Activated B cell treated with CpG ODN at 0.5 μM for 24 hours (primary cell): ENCODE measurements at regions of chr19 and their contacts with region 1.

Region 1: GRCh38 chr19:11738746-11739620 is at the start of gene ZNF823:
- DNase-seq: peak; percentile 87
- ATAC-seq: peak; percentile 98
- H3K4me3 Mint-ChIP-seq: peak within 1 kb of the TSS; percentile 99
- H3K27ac Mint-ChIP-seq: peak within 1 kb of the TSS; percentile 91
- H3K4me1 Mint-ChIP-seq: peaks cover 25% of the 10 kb centered on the region
- H3K27me3 Mint-ChIP-seq: peaks cover 1% of the 10 kb centered on the region
- CTCF ChIP-seq: no peak
- total RNA-seq, gene ZNF823: 2.6 and 3.0 TPM in 2 replicates

Region 2: GRCh38 chr19:11597202-11598102 is 141.5 kb before region 1 on chr19 and contains the start of gene ZNF627:
- CTCF ChIA-PET with region 1: no interaction called
- POLR2A ChIA-PET with region 1: no interaction called
- intact Hi-C with region 1: loop called (anchors 2 kb)
- DNase-seq: peak; percentile 91
- ATAC-seq: peak; percentile 99
- H3K4me3 Mint-ChIP-seq: peak within 1 kb of the TSS; percentile 88
- H3K27ac Mint-ChIP-seq: peak within 1 kb of the TSS; percentile 87
- H3K4me1 Mint-ChIP-seq: peaks cover 47% of the 10 kb centered on the region
- H3K27me3 Mint-ChIP-seq: no peaks in the 10 kb centered on the region
- CTCF ChIP-seq: no peak
- total RNA-seq, gene ZNF627: 17.0 and 17.6 TPM in 2 replicates

Region 3: GRCh38 chr19:11766597-11767591 is 27.9 kb after region 1 on chr19 and contains the start of gene ZNF441:
- CTCF ChIA-PET with region 1: interaction called, 3 read pairs
- POLR2A ChIA-PET with region 1: interaction called, 9 read pairs
- intact Hi-C with region 1: loop called (anchors 1 kb)
- DNase-seq: peak; percentile 87
- ATAC-seq: peak; percentile 95
- H3K4me3 Mint-ChIP-seq: peak within 1 kb of the TSS; percentile 99
- H3K27ac Mint-ChIP-seq: peak within 1 kb of the TSS; percentile 96
- H3K4me1 Mint-ChIP-seq: peaks cover 25% of the 10 kb centered on the region
- H3K27me3 Mint-ChIP-seq: peaks cover 2% of the 10 kb centered on the region
- CTCF ChIP-seq: no peak
- total RNA-seq, gene ZNF441: 23.3 and 23.9 TPM in 2 replicates

Region 4: DNA sequence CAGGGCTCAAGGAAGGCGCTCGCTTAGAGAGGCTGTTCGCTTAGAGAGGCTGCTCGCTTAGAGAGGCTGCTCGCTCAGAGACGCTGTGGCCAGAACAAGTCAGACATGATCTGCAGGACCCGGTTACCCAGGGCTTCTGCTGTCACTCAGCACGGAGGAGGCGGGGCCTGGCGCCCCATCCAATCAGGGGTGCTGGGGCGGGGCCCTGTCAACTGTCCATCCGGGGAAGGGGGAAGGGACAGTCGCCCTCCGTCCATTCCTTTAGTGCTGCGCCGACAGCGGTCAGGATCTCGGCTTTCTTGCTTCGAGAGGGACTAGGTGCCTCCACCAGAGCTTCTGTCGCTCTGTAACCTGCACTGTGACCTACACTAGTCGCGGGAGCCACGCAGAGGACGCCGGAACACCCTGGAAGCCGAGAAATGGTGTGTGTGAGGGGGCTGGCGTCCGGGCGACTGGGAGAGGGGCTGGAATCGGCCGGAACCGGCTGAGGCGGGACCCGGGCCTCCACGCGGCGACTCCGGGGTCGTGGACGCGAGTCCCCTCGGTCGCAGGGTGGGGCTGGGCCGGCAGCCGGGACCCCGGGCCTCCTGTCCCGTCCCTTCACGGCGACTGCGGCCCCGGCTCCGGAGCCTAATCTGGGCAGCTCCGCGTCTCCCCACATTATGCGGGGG is 75.2 kb after region 1 on chr19 and contains the start of gene ZNF440:
- CTCF ChIA-PET with region 1: no interaction called
- POLR2A ChIA-PET with region 1: no interaction called
- intact Hi-C with region 1: loop called (anchors 1 kb)
- DNase-seq: peak; percentile 83
- ATAC-seq: peak; percentile 99
- H3K4me3 Mint-ChIP-seq: peak within 1 kb of the TSS; percentile 92
- H3K27ac Mint-ChIP-seq: peak within 1 kb of the TSS; percentile 84
- H3K4me1 Mint-ChIP-seq: peaks cover 28% of the 10 kb centered on the region
- H3K27me3 Mint-ChIP-seq: no peaks in the 10 kb centered on the region
- CTCF ChIP-seq: no peak
- total RNA-seq, gene ZNF440: 17.7 and 18.5 TPM in 2 replicates

Region 5: DNA sequence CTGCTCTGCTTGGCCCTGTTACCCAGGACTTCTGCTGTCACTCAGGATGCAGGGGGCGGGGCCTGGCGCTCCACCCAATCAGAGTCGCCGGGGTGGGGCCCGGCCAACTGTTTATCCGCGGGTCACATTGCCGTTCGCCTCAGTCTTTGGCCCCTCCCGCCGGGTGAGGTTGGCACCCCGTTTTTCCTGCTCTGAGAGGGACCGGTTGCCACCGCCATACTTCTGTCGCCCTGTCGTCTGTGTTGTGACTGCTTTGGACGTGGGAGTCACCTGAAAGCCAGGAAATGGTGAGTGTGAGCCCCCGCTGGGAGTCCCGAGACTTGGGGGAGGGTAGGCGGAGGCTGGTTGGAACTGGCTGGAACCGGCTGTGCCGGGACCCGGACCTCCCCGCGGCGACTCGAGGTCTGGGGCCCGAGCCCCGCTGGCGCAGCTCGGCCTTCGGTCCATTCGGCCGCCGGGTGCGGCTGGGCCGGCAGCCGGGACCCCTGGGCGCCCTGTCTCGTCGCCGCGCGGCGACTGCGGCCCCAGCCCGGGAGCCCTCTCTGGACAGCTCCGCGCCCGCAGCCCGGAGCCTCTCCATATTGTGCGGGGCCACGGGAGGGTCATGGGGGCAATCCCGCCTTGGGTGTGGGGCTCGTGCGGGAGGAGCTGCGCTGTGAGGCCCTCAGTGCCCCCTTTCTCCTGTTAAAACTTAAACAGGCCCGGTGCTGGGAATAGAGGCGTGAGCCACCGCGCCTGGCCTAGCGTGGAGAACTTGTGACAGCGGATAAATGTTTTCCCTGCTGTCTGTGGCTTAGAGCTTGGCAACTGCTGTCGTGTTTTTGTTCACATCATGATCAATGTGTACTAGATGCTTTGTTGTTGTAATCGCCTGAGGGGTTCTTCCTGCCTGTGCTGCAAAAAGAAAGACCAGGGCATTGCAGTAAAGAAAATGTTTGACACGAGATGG is 325.9 kb after region 1 on chr19 and contains the start of gene ZNF844:
- CTCF ChIA-PET with region 1: no interaction called
- POLR2A ChIA-PET with region 1: interaction called, 13 read pairs
- intact Hi-C with region 1: no loop called
- DNase-seq: peak; percentile 81
- ATAC-seq: peak; percentile 95
- H3K4me3 Mint-ChIP-seq: peak within 1 kb of the TSS; percentile 92
- H3K27ac Mint-ChIP-seq: peak within 1 kb of the TSS; percentile 93
- H3K4me1 Mint-ChIP-seq: peaks cover 14% of the 10 kb centered on the region
- H3K27me3 Mint-ChIP-seq: no peaks in the 10 kb centered on the region
- CTCF ChIP-seq: no peak
- total RNA-seq, gene ZNF844: 24.8 and 27.7 TPM in 2 replicates